ENCODE measurements at regions of chr3 and their contacts with region 1.

Region 1: DNA sequence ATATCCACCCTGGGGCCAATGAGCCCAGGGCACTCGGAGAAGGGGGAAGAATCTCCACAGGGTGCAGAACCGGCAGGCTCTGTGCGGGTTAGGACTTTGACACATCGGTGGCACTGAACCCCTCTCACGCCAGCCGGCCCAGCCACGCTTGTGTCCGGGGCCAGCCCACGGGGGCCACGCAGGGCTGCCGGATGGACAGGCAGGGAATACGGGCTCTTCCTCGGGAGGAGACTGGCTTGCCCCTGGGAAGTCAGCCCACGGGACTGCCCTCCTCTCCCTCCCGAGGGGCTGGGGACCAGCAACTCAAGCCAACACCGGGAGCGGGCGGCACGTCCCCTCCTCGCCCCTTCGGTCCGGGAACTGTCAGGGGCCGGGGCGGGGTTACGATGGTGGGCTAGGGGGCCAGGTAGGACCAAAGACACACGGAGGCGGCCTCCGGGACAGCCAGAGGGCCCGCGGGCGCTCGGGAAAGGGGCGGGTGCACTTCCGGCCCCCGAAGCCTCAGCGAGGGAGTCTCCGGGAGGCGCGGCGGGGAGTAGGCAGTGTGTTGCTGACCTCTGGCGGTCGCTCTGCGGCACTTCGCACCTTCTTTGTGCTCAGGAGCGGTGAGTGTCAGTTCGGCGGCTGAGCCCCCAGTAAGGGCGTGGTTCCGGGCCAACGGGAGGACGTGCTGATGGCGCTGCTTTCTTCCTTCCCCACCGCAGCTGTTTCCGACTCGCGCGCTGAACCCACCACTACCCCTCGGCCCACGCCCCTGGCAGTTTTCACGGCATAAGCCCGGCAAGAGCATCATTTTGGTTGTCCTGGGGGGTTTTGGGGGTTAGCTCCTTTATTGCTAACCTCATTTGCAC is 5.1 kb upstream of the CYP8B1 start:
- DNase-seq: peak; percentile 93
- ATAC-seq: peak; percentile 97

Region 2: DNA sequence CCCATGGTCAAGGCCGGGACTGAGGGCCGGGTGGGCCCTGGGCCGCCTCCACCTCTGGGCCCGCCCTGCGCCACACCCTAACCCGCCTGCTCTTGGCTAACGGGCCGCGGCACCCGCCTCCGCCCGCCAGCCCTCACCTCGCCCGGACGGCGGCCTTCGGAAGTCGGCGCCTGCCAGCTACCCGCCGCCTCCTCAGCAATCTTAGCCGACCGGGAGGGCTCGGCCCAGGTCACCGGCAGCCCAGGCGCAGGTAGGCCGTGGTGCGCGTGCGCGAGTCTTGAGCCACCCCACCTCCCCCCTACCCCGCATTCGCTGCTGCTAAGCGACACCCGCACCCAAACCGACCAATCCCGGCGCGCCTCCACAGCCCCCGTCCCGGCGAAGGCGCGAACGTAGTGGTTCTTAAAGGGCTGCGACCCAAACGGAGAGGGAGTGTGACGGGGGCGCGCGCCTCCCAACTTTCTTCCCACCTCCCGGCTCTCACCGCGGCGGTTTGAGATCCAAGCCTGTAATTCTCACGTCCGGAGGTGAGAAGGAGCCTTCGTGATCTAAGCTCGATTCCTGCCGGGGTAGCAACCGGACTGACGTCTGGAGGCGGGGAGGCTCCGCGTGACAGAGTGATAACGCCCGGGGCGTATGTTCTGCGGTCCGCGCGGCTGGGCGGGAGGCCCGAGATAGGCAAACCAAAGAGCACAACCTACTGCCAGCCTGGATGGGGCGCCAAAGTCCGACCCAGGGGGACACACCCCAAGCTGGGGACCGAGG is 298.9 kb before region 1 on chr3 and contains the start of gene SEC22C:
- intact Hi-C with region 1: loop called (anchors 10 kb)
- DNase-seq: peak; percentile 98
- ATAC-seq: peak; percentile 98
- total RNA-seq, gene SEC22C: 23.9 TPM

Region 3: DNA sequence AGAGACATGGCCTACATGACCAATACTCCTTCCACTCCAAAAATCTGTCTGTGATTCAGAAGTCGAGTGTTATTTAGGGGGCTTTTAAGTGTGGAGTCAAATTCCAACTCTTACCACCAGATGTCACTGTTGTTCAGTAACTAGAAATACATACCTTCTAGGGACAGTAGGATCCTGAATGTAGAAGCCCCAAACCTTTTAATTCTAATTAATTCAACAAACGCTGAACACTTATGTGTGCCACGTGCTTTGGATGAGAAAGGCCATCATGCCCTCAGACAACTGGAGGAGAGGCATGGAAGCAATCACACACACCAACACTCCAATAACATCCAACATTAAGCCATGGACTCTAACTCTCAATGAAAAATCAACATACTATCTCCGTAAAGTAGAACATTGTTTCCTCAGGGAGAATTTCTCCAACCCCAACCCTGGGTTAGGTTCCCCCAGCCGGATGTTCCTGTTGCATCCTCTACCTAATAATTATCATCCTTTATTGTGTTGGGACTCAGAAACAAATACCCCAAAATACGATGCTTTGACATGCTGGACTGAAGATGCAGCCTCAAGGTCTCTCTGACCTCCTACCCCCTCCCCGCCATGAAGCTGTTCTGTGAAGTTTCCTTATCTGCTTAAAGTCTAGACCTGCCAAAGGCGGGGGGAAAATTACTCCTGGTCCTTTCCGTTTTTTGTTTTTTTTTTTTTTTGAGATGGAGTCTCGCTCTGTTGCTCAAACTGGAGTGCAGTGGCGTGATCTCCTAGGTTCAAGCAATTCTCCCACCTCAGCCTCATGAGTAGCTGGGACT is 99.7 kb before region 1 on chr3:
- intact Hi-C with region 1: loop called (anchors 2 kb)
- DNase-seq: no peak
- ATAC-seq: peak; percentile 64

Region 4: GRCh38 chr3:42831321-42831713 is 49.5 kb before region 1 on chr3:
- intact Hi-C with region 1: loop called (anchors 1 kb)
- DNase-seq: peak; percentile 81
- ATAC-seq: no peak

Region 5: GRCh38 chr3:43317461-43318316 is 436.9 kb after region 1 on chr3:
- intact Hi-C with region 1: no loop called
- DNase-seq: no peak
- ATAC-seq: peak; percentile 68